Naive thymus-derived CD4-positive, alpha-beta T cell (primary cell): ENCODE measurements at regions of chr11 and their contacts with region 1.

Region 1: GRCh38 chr11:83272627-83273026 is 13.5 kb downstream of the CCDC90B start:
- DNase-seq: no peak
- ATAC-seq: no peak
- H3K4me3 ChIP-seq: no peak overlapping the region
- H3K4me3 Mint-ChIP-seq: no peak overlapping the region
- H3K27ac ChIP-seq: no peak overlapping the region
- H3K27ac Mint-ChIP-seq: no peak overlapping the region
- H3K4me1 ChIP-seq: no peaks in the 10 kb centered on the region
- H3K4me1 Mint-ChIP-seq: peaks cover 7 to 31% (median 27%) of the 10 kb centered on the region in 7 donors
- H3K27me3 ChIP-seq: no peaks in the 10 kb centered on the region
- H3K27me3 Mint-ChIP-seq: no peaks in the 10 kb centered on the region

Region 2: GRCh38 chr11:83140696-83141455 is 131.8 kb before region 1 on chr11:
- CTCF ChIA-PET with region 1: no interaction called
- POLR2A ChIA-PET with region 1: no interaction called
- intact Hi-C with region 1: no loop called
- DNase-seq: no peak
- ATAC-seq: no peak
- H3K4me3 ChIP-seq: no peak overlapping the region
- H3K4me3 Mint-ChIP-seq: no peak overlapping the region
- H3K27ac ChIP-seq: no peak overlapping the region
- H3K27ac Mint-ChIP-seq: peak overlapping the region in 1 of 9 donors; percentile 3
- H3K4me1 ChIP-seq: no peaks in the 10 kb centered on the region
- H3K4me1 Mint-ChIP-seq: peaks cover 0 to 2% (median 0%) of the 10 kb centered on the region in 7 donors
- H3K27me3 ChIP-seq: no peaks in the 10 kb centered on the region
- H3K27me3 Mint-ChIP-seq: peaks cover 0 to 7% (median 0%) of the 10 kb centered on the region in 5 donors

Region 3: DNA sequence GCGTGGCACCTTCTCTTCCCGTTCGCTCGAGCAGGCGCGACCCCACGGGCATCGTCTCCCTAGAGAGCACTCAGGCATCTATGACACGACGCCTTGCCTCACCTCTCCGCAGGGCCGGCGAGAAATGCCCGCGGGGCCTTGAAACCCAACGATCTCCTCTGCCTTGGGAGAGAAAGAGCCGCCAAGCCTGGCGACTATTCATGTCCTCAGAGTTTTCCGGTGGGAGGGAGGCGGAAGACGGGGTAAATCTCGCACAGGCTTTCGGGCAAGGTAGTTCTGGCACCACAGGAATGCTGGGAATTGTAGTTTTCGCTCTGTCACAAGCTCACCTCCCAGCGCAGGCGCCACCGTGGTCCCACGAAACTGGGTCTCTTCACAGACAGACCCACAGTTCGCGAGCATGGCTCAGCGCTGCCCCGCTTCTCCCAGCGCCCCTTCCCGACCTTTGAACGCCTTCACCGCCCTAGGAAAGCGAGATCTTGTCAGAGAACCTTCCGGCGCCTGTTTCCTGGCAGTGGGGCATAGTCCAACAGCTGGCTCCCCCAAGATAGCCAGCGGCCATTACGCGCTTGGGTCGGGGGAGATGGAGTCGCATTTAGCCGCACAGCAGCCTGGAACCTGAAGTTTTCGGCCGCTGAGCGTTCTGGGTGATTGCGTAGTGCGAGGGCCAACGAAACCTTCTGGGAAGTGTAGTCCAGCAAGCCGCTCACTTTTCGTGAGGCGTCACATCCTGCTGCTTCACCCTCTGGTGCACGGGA is 13.3 kb after region 1 on chr11 and contains the start of gene CCDC90B:
- CTCF ChIA-PET with region 1: interaction called, 3 read pairs
- POLR2A ChIA-PET with region 1: interaction called, 13 read pairs
- intact Hi-C with region 1: no loop called
- DNase-seq: peak; percentile 83 to 97 (median 96)
- ATAC-seq: peak; percentile 93
- H3K4me3 ChIP-seq: peak within 1 kb of the TSS; percentile 93
- H3K4me3 Mint-ChIP-seq: peak within 1 kb of the TSS; percentile 92 to 100 (median 98)
- H3K27ac ChIP-seq: peak within 1 kb of the TSS; percentile 95
- H3K27ac Mint-ChIP-seq: peak within 1 kb of the TSS; percentile 98 to 100 (median 99)
- H3K4me1 ChIP-seq: peaks cover 14 to 23% of the 10 kb centered on the region in 2 donors
- H3K4me1 Mint-ChIP-seq: peaks cover 19 to 52% (median 36%) of the 10 kb centered on the region in 7 donors
- H3K27me3 ChIP-seq: no peaks in the 10 kb centered on the region
- H3K27me3 Mint-ChIP-seq: peaks cover 0 to 11% (median 0%) of the 10 kb centered on the region in 5 donors
- total RNA-seq, gene CCDC90B: 19.1 to 40.8 (median 27.8) TPM